Head of caudate nucleus (tissue), 42 donors: ENCODE measurements at regions of chr20 and their contacts with region 1.

Region 1: GRCh38 chr20:63501818-63502670 is 3.2 kb upstream of the EEF1A2 start:
- DNase-seq: peak; percentile 63 to 93 (median 86)

Region 2: GRCh38 chr20:63858393-63859165 is 356.5 kb after region 1 on chr20:
- intact Hi-C with region 1: loop called (anchors 10 kb)
- DNase-seq: no peak